PC-9 (cell line): ENCODE measurements at regions of chr2 and their contacts with region 1.

Region 1: DNA sequence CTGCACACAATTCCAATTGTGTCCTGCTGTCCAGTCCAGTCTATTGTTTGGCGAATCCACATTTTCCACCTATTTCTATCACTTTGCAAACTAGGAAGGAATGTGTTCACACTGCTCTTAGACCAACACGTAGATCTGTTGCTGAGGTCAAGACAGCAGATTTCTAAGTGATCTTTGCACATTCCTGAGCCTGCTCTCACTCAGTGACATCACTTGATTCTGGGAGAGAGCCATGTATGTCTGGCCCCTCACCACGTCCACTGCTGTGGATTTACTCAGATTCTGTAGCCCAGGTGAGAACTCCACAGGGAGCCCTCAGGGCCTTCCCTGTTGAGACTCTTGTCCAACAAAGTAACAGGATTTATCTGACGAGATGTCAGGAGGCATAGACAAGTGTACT is 317.2 kb downstream of the TSN start:
- DNase-seq: no peak
- H3K4me3 ChIP-seq: no peak overlapping the region
- H3K27ac ChIP-seq: no peak overlapping the region
- H3K4me1 ChIP-seq: no peaks in the 10 kb centered on the region
- H3K27me3 ChIP-seq: peaks cover 48% of the 10 kb centered on the region
- CTCF ChIP-seq: no peak

Region 2: GRCh38 chr2:121640385-121641316 is 432.0 kb before region 1 on chr2:
- CTCF ChIA-PET with region 1: no interaction called
- POLR2A ChIA-PET with region 1: no interaction called
- intact Hi-C with region 1: no loop called
- DNase-seq: no peak
- H3K4me3 ChIP-seq: no peak overlapping the region
- H3K27ac ChIP-seq: 0 out of 2 replicates have a peak overlapping the region, but pooled peaks have one; percentile 27
- H3K4me1 ChIP-seq: peaks cover 2% of the 10 kb centered on the region; the same call in 1 of the 2 replicates
- H3K27me3 ChIP-seq: no peaks in the 10 kb centered on the region
- CTCF ChIP-seq: no peak

Region 3: DNA sequence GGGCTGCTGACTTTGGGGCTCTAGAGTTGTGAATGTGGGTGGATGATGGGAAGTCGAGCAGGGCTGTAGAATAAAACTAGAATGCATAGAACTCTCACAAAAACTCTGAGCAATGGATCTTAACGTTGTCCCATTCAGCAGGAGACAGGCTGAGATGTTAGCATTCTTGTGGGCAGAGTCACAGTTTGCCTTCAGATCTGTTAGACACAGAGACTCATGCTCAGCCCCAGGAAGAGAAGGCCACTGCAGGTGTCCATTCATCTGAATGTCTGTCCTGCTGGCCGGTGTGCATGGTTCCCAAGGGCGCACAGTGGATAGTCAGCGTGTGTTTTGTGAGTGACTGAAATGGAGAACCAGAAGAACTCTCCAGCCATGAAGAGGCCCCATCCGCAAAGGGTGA is 205.9 kb before region 1 on chr2:
- CTCF ChIA-PET with region 1: no interaction called
- POLR2A ChIA-PET with region 1: no interaction called
- intact Hi-C with region 1: no loop called
- DNase-seq: no peak
- H3K4me3 ChIP-seq: no peak overlapping the region
- H3K27ac ChIP-seq: no peak overlapping the region
- H3K4me1 ChIP-seq: no peaks in the 10 kb centered on the region
- H3K27me3 ChIP-seq: peaks cover 91% of the 10 kb centered on the region
- CTCF ChIP-seq: no peak

Region 4: GRCh38 chr2:122056866-122057265 is 15.8 kb before region 1 on chr2:
- CTCF ChIA-PET with region 1: interaction called, 10 read pairs
- POLR2A ChIA-PET with region 1: no interaction called
- intact Hi-C with region 1: no loop called
- DNase-seq: peak in 1 of 2 experiments; percentile 30
- H3K4me3 ChIP-seq: no peak overlapping the region
- H3K27ac ChIP-seq: no peak overlapping the region
- H3K4me1 ChIP-seq: no peaks in the 10 kb centered on the region
- H3K27me3 ChIP-seq: peaks cover 15% of the 10 kb centered on the region
- CTCF ChIP-seq: no peak